B cell (primary cell): ENCODE measurements at regions of chr10 and their contacts with region 1.

Region 1: DNA sequence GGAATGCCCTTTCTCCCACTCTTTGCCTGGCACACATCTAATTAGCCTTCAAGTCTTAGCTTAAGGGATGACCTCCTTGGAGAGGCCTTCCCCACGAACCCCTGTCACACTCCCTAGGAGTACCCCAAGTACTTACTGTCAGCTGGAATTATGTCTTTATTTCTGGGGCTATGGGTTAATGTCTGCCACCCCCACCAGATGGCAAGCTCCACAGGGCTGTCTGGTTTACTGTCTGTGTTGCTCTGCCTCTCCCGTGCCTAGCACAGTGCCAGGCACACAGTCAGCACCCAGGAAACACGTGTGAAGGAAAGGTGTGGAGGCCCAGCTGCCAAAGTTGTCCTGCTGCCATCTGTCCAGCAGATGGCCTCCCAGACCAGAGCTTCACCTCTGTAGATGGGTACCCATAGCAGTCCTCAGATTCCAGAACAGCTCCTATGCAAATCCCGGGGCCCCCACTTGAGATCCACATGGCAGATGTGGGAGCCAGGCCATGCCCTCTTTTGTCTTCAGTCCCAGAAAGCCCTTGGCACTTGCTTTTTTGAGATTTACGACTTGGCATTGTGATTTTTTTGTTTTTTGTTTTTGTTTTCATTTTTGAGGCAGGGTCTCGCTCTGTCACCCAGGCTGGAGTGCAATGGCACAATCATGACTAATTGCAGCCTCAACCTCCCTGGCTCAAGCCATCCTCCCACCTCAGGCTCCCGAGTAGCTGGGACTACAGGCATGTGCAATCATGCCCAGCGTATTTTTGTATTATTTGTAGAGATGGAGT is 17.2 kb upstream of the PALD1 start:
- DNase-seq: peak; percentile 74
- ATAC-seq: peak; percentile 78
- H3K4me3 ChIP-seq: no peak overlapping the region
- H3K4me3 Mint-ChIP-seq: no peak overlapping the region
- H3K27ac ChIP-seq: no peak overlapping the region
- H3K27ac Mint-ChIP-seq: no peak overlapping the region
- H3K4me1 ChIP-seq: peaks cover 12 to 15% of the 10 kb centered on the region in 2 donors
- H3K4me1 Mint-ChIP-seq: peaks cover 17% of the 10 kb centered on the region
- H3K27me3 ChIP-seq: peaks cover 0 to 23% (median 12%) of the 10 kb centered on the region in 4 experiments
- H3K27me3 Mint-ChIP-seq: peaks cover 23% of the 10 kb centered on the region
- CTCF ChIP-seq: peak; percentile 90

Region 2: GRCh38 chr10:70191972-70192305 is 269.5 kb before region 1 on chr10:
- CTCF ChIA-PET with region 1: no interaction called
- POLR2A ChIA-PET with region 1: no interaction called
- intact Hi-C with region 1: no loop called
- DNase-seq: no peak
- ATAC-seq: no peak
- H3K4me3 ChIP-seq: no peak overlapping the region
- H3K4me3 Mint-ChIP-seq: no peak overlapping the region
- H3K27ac ChIP-seq: no peak overlapping the region
- H3K27ac Mint-ChIP-seq: no peak overlapping the region
- H3K4me1 ChIP-seq: no peaks in the 10 kb centered on the region
- H3K4me1 Mint-ChIP-seq: no peaks in the 10 kb centered on the region
- H3K27me3 ChIP-seq: no peaks in the 10 kb centered on the region
- H3K27me3 Mint-ChIP-seq: no peaks in the 10 kb centered on the region
- CTCF ChIP-seq: no peak

Region 3: GRCh38 chr10:70478191-70479164 is 17.1 kb after region 1 on chr10 and contains the start of gene PALD1:
- CTCF ChIA-PET with region 1: interaction called, 25 read pairs
- POLR2A ChIA-PET with region 1: no interaction called
- intact Hi-C with region 1: no loop called
- DNase-seq: peak; percentile 63
- ATAC-seq: peak; percentile 40
- H3K4me3 ChIP-seq: peak within 1 kb of the TSS in 4 of 5 experiments; percentile 50 to 64 (median 58)
- H3K4me3 Mint-ChIP-seq: peak within 1 kb of the TSS; percentile 88
- H3K27ac ChIP-seq: peak within 1 kb of the TSS in 1 of 2 donors; percentile 59
- H3K27ac Mint-ChIP-seq: peak within 1 kb of the TSS; percentile 90
- H3K4me1 ChIP-seq: peaks cover 40 to 42% of the 10 kb centered on the region in 2 donors
- H3K4me1 Mint-ChIP-seq: peaks cover 55% of the 10 kb centered on the region
- H3K27me3 ChIP-seq: peaks cover 0 to 7% (median 0%) of the 10 kb centered on the region in 4 experiments
- H3K27me3 Mint-ChIP-seq: no peaks in the 10 kb centered on the region
- CTCF ChIP-seq: peak; percentile 6
- total RNA-seq, gene PALD1: 2.2 and 2.4 TPM in 2 replicates

Region 4: GRCh38 chr10:70500812-70501301 is 39.5 kb after region 1 on chr10:
- CTCF ChIA-PET with region 1: interaction called, 14 read pairs
- POLR2A ChIA-PET with region 1: interaction called, 7 read pairs
- intact Hi-C with region 1: no loop called
- DNase-seq: no peak
- ATAC-seq: no peak
- H3K4me3 ChIP-seq: no peak overlapping the region
- H3K4me3 Mint-ChIP-seq: no peak overlapping the region
- H3K27ac ChIP-seq: no peak overlapping the region
- H3K27ac Mint-ChIP-seq: no peak overlapping the region
- H3K4me1 ChIP-seq: peaks cover 16 to 21% of the 10 kb centered on the region in 2 donors
- H3K4me1 Mint-ChIP-seq: peaks cover 31% of the 10 kb centered on the region
- H3K27me3 ChIP-seq: no peaks in the 10 kb centered on the region
- H3K27me3 Mint-ChIP-seq: no peaks in the 10 kb centered on the region
- CTCF ChIP-seq: no peak

Region 5: DNA sequence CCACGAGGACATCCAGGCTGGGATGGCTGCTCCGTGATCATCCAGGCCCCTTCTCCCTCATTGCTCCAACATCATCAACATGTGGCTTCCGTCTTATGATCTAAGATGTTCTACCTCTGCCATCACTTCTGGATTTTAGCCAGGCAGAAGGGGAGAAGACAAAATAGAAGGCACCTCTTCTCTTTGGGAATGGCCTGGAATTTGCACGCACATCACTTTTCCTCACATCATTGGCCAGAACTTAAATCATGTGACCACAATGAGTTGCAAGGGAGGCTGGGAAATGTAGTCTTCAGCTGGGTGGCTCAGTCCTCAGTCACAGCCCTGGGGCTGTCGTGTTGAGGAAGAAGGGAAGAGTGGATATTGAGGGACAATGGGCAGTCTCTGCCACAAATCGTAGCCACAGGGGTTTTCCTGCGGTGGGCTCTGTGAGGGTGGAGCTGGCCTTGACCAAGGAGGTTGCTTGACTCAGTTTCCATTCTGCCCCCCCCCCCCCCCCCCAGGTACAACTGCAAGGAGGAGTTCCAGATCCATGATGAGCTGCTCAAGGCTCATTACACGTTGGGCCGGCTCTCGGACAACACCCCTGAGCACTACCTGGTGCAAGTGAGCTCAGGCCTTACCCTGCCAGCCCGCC is 67.4 kb after region 1 on chr10:
- CTCF ChIA-PET with region 1: interaction called, 13 read pairs
- POLR2A ChIA-PET with region 1: no interaction called
- intact Hi-C with region 1: no loop called
- DNase-seq: no peak
- ATAC-seq: no peak
- H3K4me3 ChIP-seq: no peak overlapping the region
- H3K4me3 Mint-ChIP-seq: no peak overlapping the region
- H3K27ac ChIP-seq: no peak overlapping the region
- H3K27ac Mint-ChIP-seq: no peak overlapping the region
- H3K4me1 ChIP-seq: no peaks in the 10 kb centered on the region
- H3K4me1 Mint-ChIP-seq: peaks cover 2% of the 10 kb centered on the region
- H3K27me3 ChIP-seq: no peaks in the 10 kb centered on the region
- H3K27me3 Mint-ChIP-seq: no peaks in the 10 kb centered on the region
- CTCF ChIP-seq: no peak

Region 6: GRCh38 chr10:70549962-70550458 is 88.6 kb after region 1 on chr10:
- CTCF ChIA-PET with region 1: interaction called, 162 read pairs
- POLR2A ChIA-PET with region 1: no interaction called
- intact Hi-C with region 1: no loop called
- DNase-seq: peak; percentile 76
- ATAC-seq: peak; percentile 70
- H3K4me3 ChIP-seq: no peak overlapping the region
- H3K4me3 Mint-ChIP-seq: no peak overlapping the region
- H3K27ac ChIP-seq: no peak overlapping the region
- H3K27ac Mint-ChIP-seq: no peak overlapping the region
- H3K4me1 ChIP-seq: no peaks in the 10 kb centered on the region
- H3K4me1 Mint-ChIP-seq: no peaks in the 10 kb centered on the region
- H3K27me3 ChIP-seq: no peaks in the 10 kb centered on the region
- H3K27me3 Mint-ChIP-seq: no peaks in the 10 kb centered on the region
- CTCF ChIP-seq: peak; percentile 95

Region 7: GRCh38 chr10:70880077-70880534 is 418.7 kb after region 1 on chr10:
- CTCF ChIA-PET with region 1: interaction called, 15 read pairs
- POLR2A ChIA-PET with region 1: no interaction called
- intact Hi-C with region 1: loop called (anchors 2 kb)
- DNase-seq: peak; percentile 82
- ATAC-seq: peak; percentile 92
- H3K4me3 ChIP-seq: no peak overlapping the region
- H3K4me3 Mint-ChIP-seq: no peak overlapping the region
- H3K27ac ChIP-seq: no peak overlapping the region
- H3K27ac Mint-ChIP-seq: no peak overlapping the region
- H3K4me1 ChIP-seq: no peaks in the 10 kb centered on the region
- H3K4me1 Mint-ChIP-seq: peaks cover 6% of the 10 kb centered on the region
- H3K27me3 ChIP-seq: no peaks in the 10 kb centered on the region
- H3K27me3 Mint-ChIP-seq: no peaks in the 10 kb centered on the region
- CTCF ChIP-seq: peak; percentile 88